ENCODE measurements at regions of chr2 and their contacts with region 1.

Region 1: DNA sequence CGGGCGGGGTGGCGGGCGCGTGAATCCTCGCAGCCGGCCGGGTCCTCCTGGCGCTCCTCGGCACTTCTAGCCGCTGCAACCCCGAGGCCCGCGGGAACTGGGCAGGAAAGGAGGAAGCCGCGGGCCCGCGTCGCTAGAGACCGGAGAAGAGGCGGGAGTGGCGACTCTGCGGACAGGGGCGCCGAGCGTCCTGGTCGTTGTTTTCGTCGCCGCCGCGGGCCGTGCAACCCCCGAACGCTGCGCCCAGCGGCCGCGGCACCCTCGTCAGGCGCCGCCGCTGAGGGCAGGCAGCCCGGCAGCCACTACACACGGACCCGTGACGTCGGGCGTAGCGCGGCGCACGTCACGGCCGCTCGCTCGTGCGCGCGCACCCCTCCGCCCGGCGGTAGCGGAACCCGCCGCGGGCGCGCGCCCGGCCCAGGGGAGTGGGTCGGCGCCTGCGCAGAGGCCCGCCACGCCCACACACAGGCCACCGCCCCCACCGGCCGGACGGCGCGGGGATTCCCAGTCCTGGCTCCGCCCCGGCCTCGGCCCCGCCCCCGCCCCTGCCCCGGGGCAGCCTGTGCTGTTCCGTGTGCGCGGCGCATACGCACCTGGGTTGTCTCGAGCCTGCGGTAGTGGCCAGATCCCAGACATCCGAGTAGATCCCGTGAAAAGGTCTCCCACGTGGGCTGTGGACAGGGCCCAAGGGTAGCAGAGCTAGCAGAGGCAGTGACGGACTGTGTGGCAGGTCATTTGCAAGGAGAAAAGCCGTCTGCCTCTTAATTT is at the start of gene MAP3K2:
- DNase-seq: peak; percentile 93
- H3K4me3 Mint-ChIP-seq: peak within 1 kb of the TSS; percentile 88
- H3K27ac Mint-ChIP-seq: peak within 1 kb of the TSS; percentile 96
- H3K4me1 Mint-ChIP-seq: peaks cover 72% of the 10 kb centered on the region
- H3K27me3 Mint-ChIP-seq: no peaks in the 10 kb centered on the region
- total RNA-seq, gene MAP3K2: 33.4 to 34.9 TPM

Region 2: GRCh38 chr2:127081826-127082633 is 305.8 kb before region 1 on chr2:
- CTCF ChIA-PET with region 1: no interaction called
- POLR2A ChIA-PET with region 1: no interaction called
- intact Hi-C with region 1: loop called (anchors 5 kb)
- DNase-seq: peak; percentile 84
- H3K4me3 Mint-ChIP-seq: peak overlapping the region; percentile 86
- H3K27ac Mint-ChIP-seq: peak overlapping the region; percentile 95
- H3K4me1 Mint-ChIP-seq: peaks cover 53% of the 10 kb centered on the region
- H3K27me3 Mint-ChIP-seq: no peaks in the 10 kb centered on the region

Region 3: DNA sequence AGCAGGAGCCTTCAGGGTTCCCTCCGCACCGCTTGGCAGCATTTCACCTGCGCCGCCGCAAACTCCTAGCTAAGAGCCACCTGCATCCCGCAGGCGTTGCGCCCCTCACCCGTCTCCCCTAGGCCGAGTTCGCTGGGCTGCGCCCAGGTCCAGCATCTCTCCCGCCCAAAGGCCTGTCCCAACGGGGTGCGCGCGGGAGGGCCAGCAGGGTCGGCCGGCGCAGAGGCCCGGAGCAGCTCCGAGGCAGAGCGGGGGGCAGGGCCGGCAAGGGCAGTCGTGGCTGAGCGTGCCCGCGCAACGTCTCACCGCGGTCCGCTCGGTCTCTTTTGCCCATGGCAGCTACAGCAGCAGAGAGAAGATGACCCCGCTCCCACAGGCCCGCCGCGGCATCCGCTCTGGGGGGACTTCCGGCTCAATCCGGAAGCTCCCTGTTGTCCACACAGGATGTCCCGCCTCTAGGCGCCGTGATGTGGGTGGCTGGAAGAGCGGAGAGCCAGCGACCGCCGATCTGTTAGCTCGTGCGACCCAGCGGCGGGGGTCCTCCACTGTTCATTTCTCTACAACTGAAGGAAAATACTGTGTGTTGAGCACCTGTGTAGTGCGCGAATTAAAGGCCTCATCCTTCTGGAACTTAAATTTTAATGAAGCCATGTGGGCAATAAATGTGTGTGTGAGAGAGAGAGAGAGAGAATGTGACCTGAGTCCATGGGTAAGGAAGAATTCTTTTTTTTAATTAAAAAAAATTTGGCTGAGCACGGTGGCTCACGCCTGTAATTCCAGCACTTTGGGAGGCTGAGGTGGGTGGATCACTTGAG is 93.9 kb before region 1 on chr2 and contains the start of gene ERCC3:
- CTCF ChIA-PET with region 1: no interaction called
- POLR2A ChIA-PET with region 1: interaction called, 7 read pairs
- intact Hi-C with region 1: loop called (anchors 5 kb)
- DNase-seq: peak; percentile 89
- H3K4me3 Mint-ChIP-seq: peak within 1 kb of the TSS; percentile 100
- H3K27ac Mint-ChIP-seq: peak within 1 kb of the TSS; percentile 97
- H3K4me1 Mint-ChIP-seq: peaks cover 28% of the 10 kb centered on the region
- H3K27me3 Mint-ChIP-seq: no peaks in the 10 kb centered on the region
- total RNA-seq, gene ERCC3: 46.1 to 47.3 TPM

Region 4: GRCh38 chr2:127373362-127374083 is 14.3 kb before region 1 on chr2:
- CTCF ChIA-PET with region 1: no interaction called
- POLR2A ChIA-PET with region 1: no interaction called
- intact Hi-C with region 1: no loop called
- DNase-seq: no peak
- H3K4me3 Mint-ChIP-seq: no peak overlapping the region
- H3K27ac Mint-ChIP-seq: no peak overlapping the region
- H3K4me1 Mint-ChIP-seq: peaks cover 23% of the 10 kb centered on the region
- H3K27me3 Mint-ChIP-seq: no peaks in the 10 kb centered on the region

Region 5: DNA sequence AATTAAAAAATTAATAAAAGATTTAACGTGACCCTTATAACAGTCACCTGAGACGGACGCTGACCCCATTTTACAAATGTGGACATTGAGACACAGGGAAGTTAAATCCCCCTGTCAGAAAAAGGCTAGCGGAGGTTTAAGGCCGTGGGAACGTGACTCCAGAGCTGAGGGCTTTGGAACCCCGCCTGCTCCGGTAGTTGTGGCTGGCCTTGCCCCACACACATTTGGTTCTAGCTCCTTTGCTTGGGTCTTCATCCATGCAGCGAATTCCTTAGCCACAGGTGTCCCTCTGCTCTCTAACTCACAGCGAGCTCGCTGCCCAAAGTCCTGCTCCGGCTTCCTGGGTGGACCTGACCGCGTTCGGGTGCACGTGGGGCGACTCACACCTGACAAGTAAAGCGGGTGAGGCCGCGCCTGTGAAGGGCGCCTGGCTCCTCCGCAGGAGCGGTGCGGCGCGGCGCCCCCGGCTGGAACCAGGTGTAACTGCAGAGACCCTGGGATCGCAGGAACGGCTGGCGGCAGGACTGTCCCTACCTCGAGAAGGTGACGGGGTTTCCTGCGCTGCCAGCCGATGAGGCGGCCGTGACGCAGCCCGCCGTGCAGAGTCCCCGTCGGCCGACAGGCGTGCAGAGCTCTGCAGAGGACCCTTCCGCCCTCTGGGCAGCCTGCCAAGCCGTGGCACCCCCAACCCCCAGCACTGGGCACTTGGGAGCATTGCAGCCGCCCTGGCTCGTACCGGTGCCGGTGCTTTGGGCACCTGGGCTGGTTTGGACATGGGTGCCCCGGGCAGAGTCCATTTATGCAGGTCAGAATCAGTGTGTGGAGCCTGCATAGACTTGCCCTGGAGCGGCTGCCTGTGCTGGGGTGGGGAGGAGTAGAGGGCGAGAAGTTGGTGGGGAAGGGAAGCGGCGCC is 28.0 kb after region 1 on chr2:
- CTCF ChIA-PET with region 1: interaction called, 11 read pairs
- POLR2A ChIA-PET with region 1: interaction called, 21 read pairs
- intact Hi-C with region 1: no loop called
- DNase-seq: peak; percentile 91
- H3K4me3 Mint-ChIP-seq: peak overlapping the region; percentile 54
- H3K27ac Mint-ChIP-seq: no peak overlapping the region
- H3K4me1 Mint-ChIP-seq: peaks cover 34% of the 10 kb centered on the region
- H3K27me3 Mint-ChIP-seq: peaks cover 13% of the 10 kb centered on the region

Region 6: DNA sequence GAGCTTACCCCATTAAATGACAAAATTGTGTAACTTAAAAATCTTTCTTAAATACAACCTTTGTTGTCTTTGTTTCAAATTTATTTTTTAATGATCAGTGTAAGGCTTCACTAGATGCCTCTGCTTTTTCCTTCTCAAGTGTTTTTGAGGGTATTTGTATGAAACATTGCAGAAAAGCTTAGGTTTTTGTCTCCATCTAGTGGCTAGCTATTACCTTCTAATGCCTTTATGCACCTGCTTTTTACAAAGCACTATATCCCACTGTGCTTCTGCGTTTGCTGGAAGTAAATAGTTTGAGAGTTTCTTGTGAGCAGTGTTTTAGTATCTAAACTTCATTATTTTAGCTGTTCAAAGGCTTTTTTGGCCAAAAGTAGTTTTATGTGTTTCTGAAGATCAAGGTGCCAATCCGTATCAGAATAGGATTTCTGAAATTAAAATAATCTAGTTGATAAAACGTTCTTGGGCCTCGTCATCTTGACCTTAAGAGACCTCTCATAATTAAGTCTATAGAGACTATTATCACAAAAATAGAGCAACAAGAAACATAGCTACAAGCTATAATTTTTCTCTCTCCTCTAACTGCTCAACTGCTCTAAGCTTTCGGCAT is 91.5 kb after region 1 on chr2:
- CTCF ChIA-PET with region 1: interaction called, 11 read pairs
- POLR2A ChIA-PET with region 1: no interaction called
- intact Hi-C with region 1: no loop called
- DNase-seq: no peak
- H3K4me3 Mint-ChIP-seq: no peak overlapping the region
- H3K27ac Mint-ChIP-seq: no peak overlapping the region
- H3K4me1 Mint-ChIP-seq: no peaks in the 10 kb centered on the region
- H3K27me3 Mint-ChIP-seq: no peaks in the 10 kb centered on the region

Region 7: GRCh38 chr2:127701193-127701650 is 313.4 kb after region 1 on chr2 and contains the start of gene SFT2D3:
- CTCF ChIA-PET with region 1: no interaction called
- POLR2A ChIA-PET with region 1: no interaction called
- intact Hi-C with region 1: loop called (anchors 5 kb)
- DNase-seq: peak; percentile 95
- H3K4me3 Mint-ChIP-seq: peak within 1 kb of the TSS; percentile 92
- H3K27ac Mint-ChIP-seq: peak within 1 kb of the TSS; percentile 95
- H3K4me1 Mint-ChIP-seq: peaks cover 37% of the 10 kb centered on the region
- H3K27me3 Mint-ChIP-seq: no peaks in the 10 kb centered on the region
- total RNA-seq, gene SFT2D3: 3.1 to 3.6 TPM

Region 8: GRCh38 chr2:128027801-128028667 is 640.2 kb after region 1 on chr2 and contains the start of gene SAP130:
- CTCF ChIA-PET with region 1: no interaction called
- POLR2A ChIA-PET with region 1: no interaction called
- intact Hi-C with region 1: loop called (anchors 5 kb)
- DNase-seq: peak; percentile 99
- H3K4me3 Mint-ChIP-seq: peak within 1 kb of the TSS; percentile 97
- H3K27ac Mint-ChIP-seq: peak within 1 kb of the TSS; percentile 80
- H3K4me1 Mint-ChIP-seq: peaks cover 16% of the 10 kb centered on the region
- H3K27me3 Mint-ChIP-seq: no peaks in the 10 kb centered on the region
- total RNA-seq, gene SAP130: 21.8 to 25.7 TPM

Measured in activated CD4-positive, alpha-beta memory T cell treated with anti-CD3 and anti-CD28 coated beads for 36 hours (primary cell).